ENCODE measurements at regions of chrX and their contacts with region 1.

Region 1: GRCh38 chrX:41705680-41706374 is 17.1 kb downstream of the GPR34 start:
- DNase-seq: no peak
- H3K4me3 Mint-ChIP-seq: no peak overlapping the region
- H3K27ac Mint-ChIP-seq: peak overlapping the region; percentile 64
- H3K4me1 Mint-ChIP-seq: peaks cover 35% of the 10 kb centered on the region
- H3K27me3 Mint-ChIP-seq: no peaks in the 10 kb centered on the region

Region 2: DNA sequence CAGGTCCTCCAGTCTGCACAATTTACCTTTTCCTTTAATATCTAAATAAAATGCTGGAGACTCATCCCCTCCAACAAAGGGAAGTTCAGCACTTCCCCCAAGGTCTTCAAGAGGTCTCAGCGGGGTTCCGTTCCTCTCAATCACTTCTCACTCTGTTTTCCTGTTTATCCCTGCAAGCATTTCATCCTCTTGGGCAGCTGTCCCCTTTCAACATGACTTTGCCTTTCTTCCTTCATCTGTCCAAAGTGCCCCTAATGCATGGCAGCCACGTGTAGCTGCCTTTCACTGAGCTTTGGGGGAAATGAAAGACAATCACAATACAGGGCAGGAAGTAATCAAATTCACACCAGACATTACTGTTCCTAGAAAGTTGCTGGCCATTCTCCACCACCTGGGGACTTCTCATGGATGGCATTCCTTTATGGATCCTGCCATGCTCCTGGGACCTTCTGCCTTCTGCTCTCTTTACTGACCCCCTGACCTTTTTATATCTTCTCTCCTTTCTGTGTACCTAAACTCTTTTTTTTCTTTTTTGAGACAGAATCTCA is 700.3 kb before region 1 on chrX:
- intact Hi-C with region 1: no loop called
- DNase-seq: no peak
- H3K4me3 Mint-ChIP-seq: no peak overlapping the region
- H3K27ac Mint-ChIP-seq: no peak overlapping the region
- H3K4me1 Mint-ChIP-seq: peaks cover 12% of the 10 kb centered on the region
- H3K27me3 Mint-ChIP-seq: no peaks in the 10 kb centered on the region

Region 3: GRCh38 chrX:41688835-41689234 is 17.0 kb before region 1 on chrX and contains the start of gene GPR34:
- intact Hi-C with region 1: loop called (anchors 1 kb)
- DNase-seq: no peak
- H3K4me3 Mint-ChIP-seq: peak within 1 kb of the TSS; percentile 48
- H3K27ac Mint-ChIP-seq: peak within 1 kb of the TSS; percentile 63
- H3K4me1 Mint-ChIP-seq: peaks cover 39% of the 10 kb centered on the region
- H3K27me3 Mint-ChIP-seq: no peaks in the 10 kb centered on the region
- total RNA-seq, gene GPR34: 0.66 and 1.2 TPM in 2 replicates

Region 4: GRCh38 chrX:41695426-41695825 is 10.4 kb before region 1 on chrX:
- intact Hi-C with region 1: loop called (anchors 1 kb)
- DNase-seq: no peak
- H3K4me3 Mint-ChIP-seq: no peak overlapping the region
- H3K27ac Mint-ChIP-seq: no peak overlapping the region
- H3K4me1 Mint-ChIP-seq: peaks cover 38% of the 10 kb centered on the region
- H3K27me3 Mint-ChIP-seq: no peaks in the 10 kb centered on the region

Region 5: GRCh38 chrX:41720125-41720779 is 14.4 kb after region 1 on chrX:
- intact Hi-C with region 1: loop called (anchors 1 kb)
- DNase-seq: peak; percentile 23
- H3K4me3 Mint-ChIP-seq: no peak overlapping the region
- H3K27ac Mint-ChIP-seq: peak overlapping the region; percentile 82
- H3K4me1 Mint-ChIP-seq: peaks cover 61% of the 10 kb centered on the region
- H3K27me3 Mint-ChIP-seq: no peaks in the 10 kb centered on the region